ENCODE measurements at regions of chr1 and their contacts with region 1.

Region 1: GRCh38 chr1:69737527-69738185 is 169.9 kb downstream of the LRRC7 start:
- DNase-seq: peak; percentile 18 to 47 (median 29)
- H3K4me3 ChIP-seq: no peak overlapping the region
- H3K4me3 Mint-ChIP-seq: no peak overlapping the region
- H3K27ac ChIP-seq: no peak overlapping the region
- H3K27ac Mint-ChIP-seq: no peak overlapping the region
- H3K4me1 ChIP-seq: no peaks in the 10 kb centered on the region
- H3K4me1 Mint-ChIP-seq: no peaks in the 10 kb centered on the region
- H3K27me3 ChIP-seq: no peaks in the 10 kb centered on the region
- H3K27me3 Mint-ChIP-seq: no peaks in the 10 kb centered on the region
- CTCF ChIP-seq: peak; percentile 68

Region 2: DNA sequence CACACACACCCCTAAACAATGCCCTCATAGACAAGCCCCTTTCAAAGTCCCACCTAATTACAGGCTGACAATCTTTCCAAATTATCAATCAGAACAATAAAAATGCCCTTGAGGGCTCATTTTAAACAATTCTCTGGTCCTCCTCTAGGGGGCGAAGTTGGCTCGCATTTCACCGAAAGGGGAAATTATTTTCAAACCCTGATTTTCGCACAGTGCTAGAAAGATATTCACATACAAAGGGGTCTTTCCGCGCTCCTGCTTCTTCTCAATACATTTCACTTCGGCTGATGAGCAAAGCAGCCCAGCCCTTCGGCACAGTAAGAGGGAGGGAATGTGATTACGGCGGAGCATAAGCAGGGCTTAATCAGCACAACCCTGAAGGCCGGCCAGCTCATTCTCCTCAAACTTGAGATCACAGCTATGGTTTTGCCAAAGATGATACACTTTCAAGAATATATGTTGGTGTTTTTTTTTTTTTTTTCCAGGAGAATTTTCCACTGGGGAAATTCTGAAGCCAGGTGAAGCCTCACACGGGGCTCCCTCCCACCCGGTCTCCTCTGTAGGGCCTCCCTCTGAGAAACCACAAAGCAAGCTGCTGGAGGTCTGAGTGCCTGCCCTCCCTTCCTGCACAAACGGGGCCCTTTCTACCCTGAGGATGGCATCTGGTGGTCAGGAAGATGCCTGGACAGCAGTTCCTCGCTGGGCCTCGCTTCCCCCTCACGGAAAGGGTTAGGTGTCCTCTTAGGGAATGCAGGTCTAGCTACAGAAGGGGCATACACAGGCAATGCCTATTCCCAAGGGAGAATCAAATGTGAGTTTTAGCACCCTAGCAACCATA is 1971.3 kb before region 1 on chr1:
- intact Hi-C with region 1: loop called in 1 of 2 experiments (anchors 5 kb)
- DNase-seq: peak; percentile 20 to 43 (median 35)
- H3K4me3 ChIP-seq: peak overlapping the region in 2 of 3 experiments; percentile 3 to 53
- H3K4me3 Mint-ChIP-seq: peak overlapping the region; percentile 61 to 92
- H3K27ac ChIP-seq: no peak overlapping the region
- H3K27ac Mint-ChIP-seq: peak overlapping the region in 1 of 7 donors; percentile 41
- H3K4me1 ChIP-seq: peaks cover 5 to 6% of the 10 kb centered on the region in 2 donors
- H3K4me1 Mint-ChIP-seq: peaks cover 8% of the 10 kb centered on the region
- H3K27me3 ChIP-seq: peaks cover 2 to 9% of the 10 kb centered on the region in 2 donors
- H3K27me3 Mint-ChIP-seq: peaks cover 5 to 26% (median 12%) of the 10 kb centered on the region in 3 donors
- CTCF ChIP-seq: peak; percentile 75

Region 3: GRCh38 chr1:67853704-67854103 is 1884.0 kb before region 1 on chr1:
- intact Hi-C with region 1: loop called (anchors 10 kb)
- DNase-seq: no peak
- H3K4me3 ChIP-seq: no peak overlapping the region
- H3K4me3 Mint-ChIP-seq: no peak overlapping the region
- H3K27ac ChIP-seq: no peak overlapping the region
- H3K27ac Mint-ChIP-seq: no peak overlapping the region
- H3K4me1 ChIP-seq: no peaks in the 10 kb centered on the region
- H3K4me1 Mint-ChIP-seq: peaks cover 4% of the 10 kb centered on the region
- H3K27me3 ChIP-seq: no peaks in the 10 kb centered on the region
- H3K27me3 Mint-ChIP-seq: peaks cover 3 to 6% (median 4%) of the 10 kb centered on the region in 3 donors
- CTCF ChIP-seq: peak; percentile 57

Region 4: DNA sequence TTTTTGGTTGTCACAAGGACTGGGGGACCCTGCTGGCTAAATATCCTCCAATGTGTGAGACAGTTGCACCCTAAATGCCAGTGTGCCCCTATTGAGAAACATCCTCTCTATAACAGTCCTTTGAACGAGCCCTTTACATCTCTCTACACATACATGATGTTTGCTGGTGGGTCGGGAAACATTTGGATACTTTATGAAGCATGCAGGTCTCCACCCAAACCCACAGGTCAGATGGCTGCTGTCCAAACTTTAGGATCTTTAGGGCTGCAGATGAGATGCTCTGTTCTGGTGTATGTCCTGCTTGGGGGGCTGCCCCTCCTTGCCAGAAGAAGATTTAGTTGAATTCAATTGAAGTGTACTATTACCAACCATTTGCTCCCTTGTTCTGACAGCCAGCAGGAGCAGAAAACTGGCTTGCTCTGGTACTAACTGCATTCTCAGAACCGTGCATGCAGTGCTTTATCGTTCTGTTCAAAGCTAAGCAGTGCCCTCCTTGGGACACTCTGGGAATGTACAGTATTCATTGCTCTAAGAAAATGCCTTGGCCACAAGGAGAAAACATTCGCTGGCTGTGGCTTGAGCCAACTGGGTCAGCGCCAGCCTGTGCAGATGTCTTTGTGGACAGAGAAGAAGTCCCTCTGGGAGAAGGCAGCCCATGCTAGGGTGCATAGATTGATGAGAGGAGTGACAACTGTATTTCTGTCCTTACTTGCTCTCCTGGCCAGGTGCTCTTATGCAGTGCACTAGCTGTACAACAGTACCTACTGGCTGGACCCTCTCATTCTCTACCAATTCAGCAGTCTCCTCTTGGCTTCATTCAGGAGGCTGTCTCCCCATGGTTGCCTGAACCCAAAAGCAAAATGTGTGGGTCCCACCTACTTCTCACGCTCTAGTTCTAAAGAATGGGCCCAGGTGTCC is 1625.9 kb before region 1 on chr1:
- intact Hi-C with region 1: loop called (anchors 5 kb)
- DNase-seq: no peak
- H3K4me3 ChIP-seq: no peak overlapping the region
- H3K4me3 Mint-ChIP-seq: no peak overlapping the region
- H3K27ac ChIP-seq: no peak overlapping the region
- H3K27ac Mint-ChIP-seq: no peak overlapping the region
- H3K4me1 ChIP-seq: peaks cover 0 to 1% of the 10 kb centered on the region in 2 donors
- H3K4me1 Mint-ChIP-seq: peaks cover 2% of the 10 kb centered on the region
- H3K27me3 ChIP-seq: peaks cover 0 to 4% of the 10 kb centered on the region in 2 donors
- H3K27me3 Mint-ChIP-seq: peaks cover 4 to 15% (median 7%) of the 10 kb centered on the region in 3 donors
- CTCF ChIP-seq: no peak

Region 5: DNA sequence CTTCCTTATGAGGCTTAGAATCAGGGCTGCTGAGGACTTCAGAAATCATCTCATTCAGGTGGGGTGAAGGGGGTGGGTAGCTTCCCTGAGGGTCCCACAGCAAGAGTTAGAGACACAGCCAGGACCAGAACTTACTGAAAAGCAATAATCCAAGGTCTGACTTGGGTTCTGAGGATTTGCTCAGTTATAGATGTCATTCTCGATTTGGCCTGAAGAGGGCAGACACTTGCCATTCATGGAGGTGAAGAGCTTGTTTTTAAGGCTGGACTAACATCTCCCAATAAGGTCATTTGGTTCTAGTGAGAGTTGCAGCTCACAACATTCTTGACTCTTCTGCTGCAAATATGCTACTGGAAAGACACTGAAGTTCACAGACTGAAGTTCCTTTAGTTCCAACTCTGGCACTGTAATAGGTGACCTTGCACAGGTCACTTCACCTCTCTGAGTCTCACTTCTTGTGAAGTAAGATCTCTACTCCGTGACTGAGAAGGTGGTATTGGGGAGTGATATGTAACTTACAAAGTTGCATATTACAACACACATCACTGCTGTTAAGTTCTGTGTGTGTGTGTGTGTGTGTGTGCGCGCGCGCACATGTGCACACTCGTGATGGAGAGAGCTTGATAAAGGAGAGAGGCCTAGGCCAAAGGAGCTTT is 1617.4 kb before region 1 on chr1:
- intact Hi-C with region 1: loop called in 1 of 2 experiments (anchors 5 kb)
- DNase-seq: peak; percentile 37 to 54 (median 53)
- H3K4me3 ChIP-seq: no peak overlapping the region
- H3K4me3 Mint-ChIP-seq: no peak overlapping the region
- H3K27ac ChIP-seq: no peak overlapping the region
- H3K27ac Mint-ChIP-seq: no peak overlapping the region
- H3K4me1 ChIP-seq: peaks cover 0 to 4% of the 10 kb centered on the region in 2 donors
- H3K4me1 Mint-ChIP-seq: peaks cover 6% of the 10 kb centered on the region
- H3K27me3 ChIP-seq: no peaks in the 10 kb centered on the region
- H3K27me3 Mint-ChIP-seq: peaks cover 0 to 4% (median 0%) of the 10 kb centered on the region in 3 donors
- CTCF ChIP-seq: peak; percentile 89

Region 6: GRCh38 chr1:69686367-69686984 is 51.2 kb before region 1 on chr1:
- intact Hi-C with region 1: no loop called
- DNase-seq: no peak
- H3K4me3 ChIP-seq: no peak overlapping the region
- H3K4me3 Mint-ChIP-seq: no peak overlapping the region
- H3K27ac ChIP-seq: no peak overlapping the region
- H3K27ac Mint-ChIP-seq: no peak overlapping the region
- H3K4me1 ChIP-seq: peaks cover 26 to 34% of the 10 kb centered on the region in 2 donors
- H3K4me1 Mint-ChIP-seq: peaks cover 29% of the 10 kb centered on the region
- H3K27me3 ChIP-seq: no peaks in the 10 kb centered on the region
- H3K27me3 Mint-ChIP-seq: peaks cover 0 to 2% (median 0%) of the 10 kb centered on the region in 3 donors
- CTCF ChIP-seq: no peak

Region 7: DNA sequence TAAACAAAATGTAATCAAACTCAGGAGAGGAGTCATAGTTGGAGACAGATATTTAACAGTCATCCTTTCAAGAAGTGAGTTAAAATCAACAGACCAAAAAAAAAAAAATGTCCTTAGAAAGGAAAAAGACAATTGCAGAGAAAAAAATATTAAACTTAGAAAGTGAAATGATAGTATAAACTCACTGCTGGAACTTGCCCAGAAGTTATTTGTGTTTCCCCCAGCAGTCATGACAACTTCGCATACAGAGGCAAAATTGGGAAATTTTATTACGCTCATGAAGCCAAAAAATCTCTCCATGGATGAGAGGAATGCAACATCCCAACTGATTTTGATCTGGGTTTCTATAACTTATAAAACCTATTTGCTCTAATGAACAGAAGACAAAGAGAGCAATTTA is 28.3 kb after region 1 on chr1:
- intact Hi-C with region 1: no loop called
- DNase-seq: no peak
- H3K4me3 ChIP-seq: no peak overlapping the region
- H3K4me3 Mint-ChIP-seq: no peak overlapping the region
- H3K27ac ChIP-seq: no peak overlapping the region
- H3K27ac Mint-ChIP-seq: no peak overlapping the region
- H3K4me1 ChIP-seq: no peaks in the 10 kb centered on the region
- H3K4me1 Mint-ChIP-seq: no peaks in the 10 kb centered on the region
- H3K27me3 ChIP-seq: no peaks in the 10 kb centered on the region
- H3K27me3 Mint-ChIP-seq: no peaks in the 10 kb centered on the region
- CTCF ChIP-seq: no peak

Measured in CD14-positive monocyte (primary cell).